Caco-2 (cell line): ENCODE measurements at regions of chr1 and their contacts with region 1.

Region 1: GRCh38 chr1:195047772-195048171 is 1560.5 kb downstream of the KCNT2 start:
- DNase-seq: no peak
- H3K4me3 ChIP-seq: no peak overlapping the region
- H3K4me3 Mint-ChIP-seq: no peak overlapping the region
- H3K27ac Mint-ChIP-seq: no peak overlapping the region
- H3K4me1 ChIP-seq: no peaks in the 10 kb centered on the region
- H3K4me1 Mint-ChIP-seq: no peaks in the 10 kb centered on the region
- H3K27me3 ChIP-seq: no peaks in the 10 kb centered on the region
- H3K27me3 Mint-ChIP-seq: no peaks in the 10 kb centered on the region
- CTCF ChIP-seq: no peak

Region 2: DNA sequence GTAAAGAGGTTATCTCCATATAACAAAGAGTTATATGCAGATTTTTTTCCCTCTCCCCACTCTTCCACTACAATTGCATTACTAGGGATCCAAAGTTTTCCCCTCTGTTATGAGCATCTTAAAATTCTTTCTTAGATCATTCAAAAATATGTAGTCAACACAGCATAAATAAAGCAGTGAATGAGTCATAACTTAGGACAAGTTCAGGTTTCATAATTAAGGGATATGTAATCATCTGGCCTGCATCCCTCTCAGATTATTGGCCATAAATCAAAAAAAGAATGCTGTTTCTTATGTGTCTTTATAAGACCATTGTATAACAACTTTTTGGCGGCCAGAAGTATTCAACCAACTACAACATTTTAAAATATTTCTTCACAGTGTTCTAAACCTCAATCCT is 34.4 kb after region 1 on chr1:
- CTCF ChIA-PET with region 1: no interaction called
- POLR2A ChIA-PET with region 1: no interaction called
- intact Hi-C with region 1: no loop called
- DNase-seq: no peak
- H3K4me3 ChIP-seq: no peak overlapping the region
- H3K4me3 Mint-ChIP-seq: no peak overlapping the region
- H3K27ac Mint-ChIP-seq: no peak overlapping the region
- H3K4me1 ChIP-seq: no peaks in the 10 kb centered on the region
- H3K4me1 Mint-ChIP-seq: no peaks in the 10 kb centered on the region
- H3K27me3 ChIP-seq: no peaks in the 10 kb centered on the region
- H3K27me3 Mint-ChIP-seq: no peaks in the 10 kb centered on the region
- CTCF ChIP-seq: no peak

Region 3: GRCh38 chr1:195376190-195376589 is 328.4 kb after region 1 on chr1:
- CTCF ChIA-PET with region 1: no interaction called
- POLR2A ChIA-PET with region 1: no interaction called
- intact Hi-C with region 1: loop called (anchors 10 kb)
- DNase-seq: no peak
- H3K4me3 ChIP-seq: no peak overlapping the region
- H3K4me3 Mint-ChIP-seq: no peak overlapping the region
- H3K27ac Mint-ChIP-seq: no peak overlapping the region
- H3K4me1 ChIP-seq: no peaks in the 10 kb centered on the region
- H3K4me1 Mint-ChIP-seq: no peaks in the 10 kb centered on the region
- H3K27me3 ChIP-seq: no peaks in the 10 kb centered on the region
- H3K27me3 Mint-ChIP-seq: no peaks in the 10 kb centered on the region
- CTCF ChIP-seq: peak in 1 of 2 experiments; percentile 7